ENCODE measurements at regions of chr6 and their contacts with region 1.

Region 1: DNA sequence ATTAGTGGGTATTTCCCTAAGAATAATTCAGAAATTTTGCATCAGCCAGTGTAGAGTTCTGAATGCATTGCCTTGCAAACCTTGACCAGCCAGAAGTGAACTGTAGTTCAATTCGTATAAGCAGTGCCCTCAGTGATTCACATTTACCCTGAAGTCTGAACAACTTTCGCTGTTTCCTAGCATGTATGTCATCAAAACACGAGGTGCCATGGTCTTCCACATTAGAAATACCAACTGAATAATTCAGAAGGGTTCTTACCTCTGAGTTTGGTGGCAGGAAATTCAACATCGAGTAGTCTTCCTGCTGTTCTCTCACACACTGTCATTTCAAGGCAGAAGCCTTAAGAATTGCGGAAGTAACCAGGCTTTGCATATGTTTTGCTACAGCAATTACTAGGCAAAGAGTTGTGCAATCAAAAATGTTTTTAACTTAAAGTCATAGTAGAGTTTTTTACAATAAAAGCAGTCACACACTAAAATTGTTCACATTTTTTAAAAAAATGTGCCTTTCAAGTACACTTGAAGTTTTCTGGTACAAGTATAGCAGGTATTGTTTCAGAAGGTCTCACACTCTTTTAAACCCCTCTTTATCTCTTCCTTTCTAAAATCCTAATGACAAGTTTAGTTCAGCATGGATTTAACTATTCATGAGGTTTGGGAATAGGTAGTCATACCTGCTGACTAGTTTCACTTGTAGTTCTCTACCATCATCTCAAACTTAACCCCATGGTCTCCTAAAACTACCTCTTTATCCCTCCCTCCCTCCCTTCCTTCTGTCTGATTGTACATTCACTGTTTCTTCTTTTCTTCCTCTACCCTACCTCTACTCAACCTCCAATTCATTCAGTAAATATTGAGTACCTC is 118.3 kb downstream of the STXBP5 start:
- DNase-seq: peak; percentile 17
- H3K4me3 Mint-ChIP-seq: peak overlapping the region; percentile 66
- H3K27ac Mint-ChIP-seq: peak overlapping the region; percentile 87
- H3K4me1 Mint-ChIP-seq: peaks cover 18% of the 10 kb centered on the region
- H3K27me3 Mint-ChIP-seq: no peaks in the 10 kb centered on the region

Region 2: DNA sequence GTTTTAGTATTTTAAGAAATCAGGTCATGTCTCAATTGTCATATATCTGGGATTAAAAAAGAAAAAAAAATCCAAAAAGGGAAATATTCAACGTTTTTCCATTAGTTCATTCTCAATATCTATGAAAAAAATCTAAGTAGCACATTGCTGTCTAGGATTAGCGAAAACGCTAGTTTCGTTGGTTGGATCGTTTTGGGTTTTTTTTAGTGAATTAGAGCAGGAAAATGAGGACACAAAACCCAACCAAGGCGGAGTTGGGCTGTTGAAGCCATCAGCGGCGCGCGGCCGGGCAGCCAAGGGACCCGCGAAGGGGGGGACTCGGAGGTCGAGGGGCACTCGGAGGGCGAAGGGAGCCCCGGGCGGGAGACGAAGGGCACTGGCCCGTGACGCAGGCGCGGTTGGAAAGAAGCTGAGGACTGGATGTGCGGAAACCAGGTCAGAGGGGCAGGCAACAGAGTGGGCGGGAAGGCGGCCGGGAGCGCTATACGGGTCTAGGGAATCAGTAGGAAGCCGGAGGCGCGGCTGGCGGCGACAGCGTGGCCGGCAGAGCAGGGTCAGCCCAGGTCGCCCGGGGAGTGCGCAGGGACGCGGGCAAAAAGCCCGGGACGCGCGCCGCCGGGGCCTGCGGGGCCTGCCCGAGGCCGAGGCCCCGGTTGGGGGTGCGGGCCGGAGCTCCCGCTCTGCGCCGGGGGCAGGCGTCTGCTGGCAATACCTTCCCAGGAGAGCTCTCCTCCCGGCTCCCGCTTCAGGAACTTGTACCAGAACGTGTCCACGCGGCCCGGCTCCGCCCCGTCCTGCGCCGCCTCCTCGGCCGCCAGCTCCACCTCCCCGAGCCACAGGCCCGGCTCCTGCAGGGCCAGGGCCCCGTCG is 1587.8 kb before region 1 on chr6:
- intact Hi-C with region 1: loop called (anchors 10 kb)
- DNase-seq: peak; percentile 52
- H3K4me3 Mint-ChIP-seq: peak overlapping the region; percentile 94
- H3K27ac Mint-ChIP-seq: peak overlapping the region; percentile 96
- H3K4me1 Mint-ChIP-seq: peaks cover 26% of the 10 kb centered on the region
- H3K27me3 Mint-ChIP-seq: no peaks in the 10 kb centered on the region

Region 3: DNA sequence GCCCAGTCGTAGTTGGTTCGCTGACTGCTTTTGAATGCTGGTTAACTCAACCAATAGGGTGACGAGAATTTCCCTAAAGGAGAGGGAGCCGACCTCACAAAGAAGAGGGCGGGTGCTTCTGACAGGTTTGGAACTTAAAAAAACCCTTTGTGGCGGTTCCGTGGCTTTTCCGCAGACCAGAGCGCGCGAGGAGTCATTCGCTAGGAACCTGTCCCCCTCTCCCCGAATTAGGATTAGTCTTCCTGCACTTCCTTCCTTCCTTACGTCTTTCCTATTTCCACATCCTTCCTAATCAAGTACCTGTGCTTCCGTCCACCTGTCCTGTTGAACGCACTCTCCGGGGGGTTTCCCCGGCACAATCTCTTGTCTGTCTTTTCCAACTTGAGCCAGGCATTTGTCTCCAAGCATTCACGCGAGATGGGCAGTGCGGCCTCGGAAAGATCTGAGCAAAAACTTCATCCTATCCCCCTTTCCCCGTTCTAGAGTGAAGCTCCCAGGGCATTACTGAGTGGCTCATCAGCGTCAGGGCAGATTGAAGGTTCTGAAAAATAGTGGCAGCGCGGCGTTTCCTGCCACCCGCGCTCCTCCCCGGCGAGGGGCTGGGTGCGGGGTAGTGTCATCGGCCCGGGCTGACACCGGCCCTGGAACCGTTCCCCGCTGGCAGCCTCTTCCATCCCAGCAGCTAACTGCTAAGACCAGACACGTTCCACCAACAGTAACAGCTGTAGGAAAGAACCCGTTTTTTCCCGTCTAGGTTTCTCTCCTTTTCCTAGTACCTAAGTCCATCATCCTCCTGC is 119.8 kb before region 1 on chr6:
- intact Hi-C with region 1: loop called (anchors 2 kb)
- DNase-seq: peak; percentile 77
- H3K4me3 Mint-ChIP-seq: peak overlapping the region; percentile 89
- H3K27ac Mint-ChIP-seq: peak overlapping the region; percentile 98
- H3K4me1 Mint-ChIP-seq: peaks cover 39% of the 10 kb centered on the region
- H3K27me3 Mint-ChIP-seq: no peaks in the 10 kb centered on the region

Region 4: GRCh38 chr6:147268254-147268653 is 54.3 kb before region 1 on chr6:
- intact Hi-C with region 1: loop called (anchors 1 kb)
- DNase-seq: no peak
- H3K4me3 Mint-ChIP-seq: no peak overlapping the region
- H3K27ac Mint-ChIP-seq: peak overlapping the region; percentile 28
- H3K4me1 Mint-ChIP-seq: peaks cover 16% of the 10 kb centered on the region
- H3K27me3 Mint-ChIP-seq: no peaks in the 10 kb centered on the region

Region 5: DNA sequence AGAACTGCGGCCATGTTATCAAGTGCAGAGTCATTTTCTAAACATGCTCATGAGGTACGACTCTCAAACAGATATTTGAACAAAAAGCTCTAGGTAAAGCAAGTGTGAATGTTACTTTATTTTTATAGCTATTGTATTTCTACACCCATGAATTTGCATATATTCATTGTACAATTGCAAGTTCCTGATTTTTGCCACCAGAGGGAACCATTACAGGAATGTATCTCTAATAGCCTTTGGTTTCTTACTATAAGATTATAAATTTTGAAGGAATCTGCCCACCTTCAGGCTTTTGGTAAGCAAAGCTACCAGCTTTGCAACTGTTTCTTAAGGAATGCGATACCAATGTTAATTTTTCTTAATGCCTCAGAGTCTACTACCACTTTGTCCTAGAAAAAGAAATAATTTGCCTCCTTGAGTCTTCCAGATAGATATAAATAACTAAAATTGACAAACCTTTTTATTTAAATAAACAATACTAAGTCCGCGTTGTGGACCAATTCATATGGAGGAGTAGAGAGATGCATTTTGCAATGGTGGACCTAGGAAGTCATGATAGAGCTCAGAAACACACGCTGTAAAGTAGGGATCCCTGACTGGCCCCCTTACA is 60.5 kb after region 1 on chr6:
- intact Hi-C with region 1: loop called (anchors 1 kb)
- DNase-seq: no peak
- H3K4me3 Mint-ChIP-seq: no peak overlapping the region
- H3K27ac Mint-ChIP-seq: no peak overlapping the region
- H3K4me1 Mint-ChIP-seq: peaks cover 7% of the 10 kb centered on the region
- H3K27me3 Mint-ChIP-seq: no peaks in the 10 kb centered on the region